OCI-LY7 (cell line): ENCODE measurements at regions of chr7 and their contacts with region 1.

Region 1: GRCh38 chr7:155598810-155599210 is 45.7 kb upstream of the RBM33 start:
- DNase-seq: peak; percentile 83
- H3K4me3 ChIP-seq: no peak overlapping the region
- H3K27ac ChIP-seq: no peak overlapping the region
- H3K4me1 ChIP-seq: peaks cover 5% of the 10 kb centered on the region
- CTCF ChIP-seq: peak; percentile 99

Region 2: GRCh38 chr7:154484406-154484805 is 1114.4 kb before region 1 on chr7:
- CTCF ChIA-PET with region 1: no interaction called
- POLR2A ChIA-PET with region 1: no interaction called
- intact Hi-C with region 1: no loop called
- DNase-seq: no peak
- H3K4me3 ChIP-seq: no peak overlapping the region
- H3K27ac ChIP-seq: no peak overlapping the region
- H3K4me1 ChIP-seq: no peaks in the 10 kb centered on the region
- CTCF ChIP-seq: no peak

Region 3: DNA sequence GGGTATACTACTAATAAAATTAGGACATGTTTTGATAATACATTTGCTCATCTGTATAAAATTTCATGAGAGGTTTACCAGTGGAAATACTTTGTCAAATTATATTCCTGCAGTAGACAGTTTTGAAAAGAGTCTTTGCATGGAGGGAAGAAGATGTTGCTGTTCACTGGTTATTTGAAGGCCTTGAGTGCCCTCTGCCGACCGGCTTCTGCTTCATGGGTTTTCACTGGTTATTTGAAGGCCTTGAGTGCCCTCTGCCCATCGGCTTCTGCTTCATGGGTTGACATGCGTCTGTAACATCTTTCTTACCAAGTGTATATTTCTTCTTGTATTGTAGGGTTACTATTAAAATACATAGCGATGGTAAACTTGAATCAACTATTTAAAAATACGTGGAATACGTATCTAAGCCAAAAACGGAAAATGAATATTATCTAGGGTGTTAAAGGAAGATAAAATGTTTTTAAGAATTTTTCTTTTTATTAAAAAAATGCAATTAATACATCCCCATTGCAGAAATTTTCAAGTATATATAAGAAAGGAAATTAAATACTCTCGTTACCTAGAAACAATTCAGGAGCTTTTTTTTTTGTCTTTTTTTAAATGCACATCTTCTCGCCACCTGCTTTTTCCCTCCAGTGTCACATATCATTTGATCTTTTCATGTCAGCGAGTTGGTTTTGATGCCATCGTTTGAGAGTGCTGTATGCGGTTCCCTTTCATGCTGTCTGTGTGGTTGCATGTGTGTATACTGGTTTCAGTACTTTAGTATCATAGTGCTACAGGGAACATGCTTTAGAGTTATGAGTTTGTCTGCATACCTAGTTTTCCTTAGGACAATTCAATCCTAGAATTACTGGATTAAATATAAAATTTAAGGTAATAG is 140.1 kb after region 1 on chr7:
- CTCF ChIA-PET with region 1: interaction called, 8 read pairs
- POLR2A ChIA-PET with region 1: interaction called, 5 read pairs
- intact Hi-C with region 1: loop called (anchors 1 kb)
- DNase-seq: peak; percentile 84
- H3K4me3 ChIP-seq: no peak overlapping the region
- H3K27ac ChIP-seq: no peak overlapping the region
- H3K4me1 ChIP-seq: peaks cover 40% of the 10 kb centered on the region
- CTCF ChIP-seq: peak; percentile 96

Region 4: DNA sequence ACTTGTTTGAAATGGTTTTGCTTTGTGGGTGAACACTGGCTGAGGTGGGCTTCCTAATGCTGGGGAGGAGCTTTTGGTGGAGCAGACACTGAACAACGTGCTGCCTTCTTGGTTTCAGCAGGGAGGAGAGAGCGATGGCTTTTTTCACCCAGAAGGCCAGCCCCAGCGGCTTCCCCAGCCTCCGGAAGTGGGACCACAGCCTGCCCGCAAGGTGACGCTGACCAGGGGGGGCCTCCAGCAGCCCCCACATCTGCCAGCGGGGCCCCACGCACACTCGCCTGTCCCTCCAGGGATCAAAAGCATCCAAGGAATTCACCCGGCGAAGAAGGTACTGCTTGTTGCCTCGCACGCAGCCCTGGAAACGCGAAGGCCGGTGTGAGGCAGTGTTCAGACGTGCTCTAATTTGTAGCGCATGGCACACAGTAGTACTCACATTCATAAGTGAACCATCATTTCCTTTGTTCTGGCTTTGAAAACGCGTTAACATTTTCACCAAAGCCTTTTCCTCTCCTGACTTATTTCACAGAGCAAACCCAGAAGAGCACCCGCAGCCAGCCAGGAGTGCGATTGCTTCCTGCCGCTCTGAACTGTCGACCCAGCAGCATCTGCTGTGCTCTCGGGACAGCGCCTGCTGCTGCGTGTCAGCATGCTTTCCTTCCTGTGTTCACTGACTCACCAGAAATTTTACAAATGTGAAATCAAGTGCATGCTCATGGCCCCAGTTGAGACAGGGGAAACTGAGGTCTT is 165.1 kb after region 1 on chr7:
- CTCF ChIA-PET with region 1: interaction called, 4 read pairs
- POLR2A ChIA-PET with region 1: interaction called, 3 read pairs
- intact Hi-C with region 1: loop called (anchors 1 kb)
- DNase-seq: no peak
- H3K4me3 ChIP-seq: no peak overlapping the region
- H3K27ac ChIP-seq: no peak overlapping the region
- H3K4me1 ChIP-seq: no peaks in the 10 kb centered on the region
- CTCF ChIP-seq: no peak